Heart left ventricle (tissue), 16 donors: ENCODE measurements at regions of chr9 and their contacts with region 1.

Region 1: GRCh38 chr9:33167046-33167808 is at the start of gene B4GALT1:
- DNase-seq: peak; percentile 96 to 99 (median 97)
- ATAC-seq: peak; percentile 39 to 90 (median 71)
- H3K4me3 ChIP-seq: peak within 1 kb of the TSS; percentile 65 to 100 (median 91)
- H3K27ac ChIP-seq: peak within 1 kb of the TSS; percentile 96 to 100 (median 99)
- H3K4me1 ChIP-seq: peaks cover 13 to 63% (median 43%) of the 10 kb centered on the region in 12 donors
- H3K27me3 ChIP-seq: no peaks in the 10 kb centered on the region
- CTCF ChIP-seq: peak in 4 of 12 donors; percentile 12 to 35 (median 18)
- POLR2A ChIP-seq: peak; percentile 76 to 96
- total RNA-seq, gene B4GALT1: 27.4 to 73.3 (median 44.8) TPM

Region 2: DNA sequence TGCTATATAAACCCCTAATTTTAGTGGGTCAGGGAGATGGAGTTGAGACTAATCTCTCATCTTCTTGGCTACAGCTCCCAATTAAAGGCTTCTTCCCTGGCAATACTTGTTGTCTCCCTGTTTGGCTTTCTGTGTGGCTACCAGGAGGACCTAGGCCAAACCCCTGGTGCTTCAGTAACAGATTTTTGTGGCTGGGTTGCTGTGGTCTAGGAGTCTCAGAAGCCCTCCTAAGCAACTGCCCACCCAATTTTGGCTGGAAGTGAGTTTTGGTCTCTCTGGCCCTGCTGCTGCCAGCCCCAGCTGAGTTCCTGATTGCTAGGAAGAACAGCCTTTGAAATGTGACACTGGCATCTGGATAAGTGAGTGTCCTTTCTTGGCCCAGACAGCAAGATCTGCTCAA is 651.0 kb before region 1 on chr9:
- intact Hi-C with region 1: no loop called
- DNase-seq: no peak
- ATAC-seq: no peak
- H3K4me3 ChIP-seq: no peak overlapping the region
- H3K27ac ChIP-seq: no peak overlapping the region
- H3K4me1 ChIP-seq: peaks cover 0 to 9% (median 0%) of the 10 kb centered on the region in 12 donors
- H3K27me3 ChIP-seq: no peaks in the 10 kb centered on the region
- CTCF ChIP-seq: no peak
- POLR2A ChIP-seq: no peak

Region 3: GRCh38 chr9:33081128-33081851 is 85.9 kb before region 1 on chr9:
- intact Hi-C with region 1: loop called (anchors 1 to 5 kb)
- DNase-seq: peak in 4 of 5 donors; percentile 58 to 75 (median 64)
- ATAC-seq: peak in 3 of 4 donors; percentile 62 to 68 (median 62)
- H3K4me3 ChIP-seq: peak overlapping the region in 2 of 12 donors; percentile 11 to 37
- H3K27ac ChIP-seq: peak overlapping the region in 9 of 12 donors; percentile 9 to 81 (median 44)
- H3K4me1 ChIP-seq: peaks cover 0 to 29% (median 7%) of the 10 kb centered on the region in 12 donors
- H3K27me3 ChIP-seq: no peaks in the 10 kb centered on the region
- CTCF ChIP-seq: peak; percentile 60 to 85 (median 78)
- POLR2A ChIP-seq: no peak

Region 4: GRCh38 chr9:33106827-33107621 is 60.2 kb before region 1 on chr9:
- intact Hi-C with region 1: loop called in 7 of 10 experiments (anchors 2 to 10 kb)
- DNase-seq: peak; percentile 67 to 78 (median 76)
- ATAC-seq: peak; percentile 43 to 75 (median 69)
- H3K4me3 ChIP-seq: no peak overlapping the region
- H3K27ac ChIP-seq: peak overlapping the region; percentile 62 to 93 (median 79)
- H3K4me1 ChIP-seq: peaks cover 7 to 56% (median 30%) of the 10 kb centered on the region in 12 donors
- H3K27me3 ChIP-seq: no peaks in the 10 kb centered on the region
- CTCF ChIP-seq: no peak
- POLR2A ChIP-seq: no peak

Region 5: GRCh38 chr9:33130508-33130911 is 36.7 kb before region 1 on chr9:
- intact Hi-C with region 1: loop called in 6 of 10 experiments (anchors 5 kb)
- DNase-seq: no peak
- ATAC-seq: peak in 3 of 4 donors; percentile 8 to 46 (median 41)
- H3K4me3 ChIP-seq: no peak overlapping the region
- H3K27ac ChIP-seq: peak overlapping the region in 7 of 12 donors; percentile 20 to 45 (median 43)
- H3K4me1 ChIP-seq: peaks cover 22 to 87% (median 72%) of the 10 kb centered on the region in 12 donors
- H3K27me3 ChIP-seq: no peaks in the 10 kb centered on the region
- CTCF ChIP-seq: no peak
- POLR2A ChIP-seq: no peak

Region 6: DNA sequence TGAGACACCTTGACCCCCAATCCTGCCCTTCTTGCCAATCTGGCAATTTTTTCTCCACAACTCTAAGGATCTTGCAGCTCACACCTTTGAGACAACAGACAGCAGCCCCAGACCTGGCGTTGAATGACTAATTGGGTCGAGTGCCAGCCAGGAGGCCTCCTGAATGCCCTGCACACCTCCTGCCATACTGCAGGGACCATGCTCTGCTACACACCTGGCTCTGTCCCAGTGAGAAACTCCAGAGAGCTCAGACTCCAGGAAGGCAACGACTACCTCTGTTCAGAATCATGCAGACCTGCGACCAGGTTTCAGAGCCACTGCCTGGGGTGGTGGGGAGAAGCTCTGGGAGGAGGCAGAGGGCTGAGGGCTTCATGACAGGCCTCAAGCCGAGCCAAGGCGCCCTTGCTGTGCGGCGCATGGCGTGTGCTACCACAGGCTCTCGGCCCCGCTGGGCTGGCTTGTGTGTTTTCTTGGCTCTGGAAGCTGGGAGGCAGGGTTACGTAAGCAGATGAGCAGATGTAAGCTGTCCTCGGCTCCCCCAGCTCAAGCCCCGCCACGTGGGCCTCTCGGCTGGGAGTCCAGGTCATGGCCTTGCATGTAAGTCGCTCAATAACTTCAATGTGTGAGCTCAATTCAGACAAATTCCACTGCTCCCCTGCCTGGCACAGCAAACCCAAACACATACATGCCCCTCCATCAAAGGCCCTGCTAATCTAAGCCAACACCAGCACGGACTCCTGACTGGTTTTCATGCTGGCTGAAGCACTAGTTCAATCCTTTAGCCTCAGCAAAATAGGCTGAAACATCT is 27.6 kb before region 1 on chr9:
- intact Hi-C with region 1: loop called in 3 of 10 experiments (anchors 2 to 5 kb)
- DNase-seq: peak; percentile 83 to 91 (median 88)
- ATAC-seq: peak; percentile 65 to 83 (median 80)
- H3K4me3 ChIP-seq: peak overlapping the region in 3 of 12 donors; percentile 0 to 11 (median 7)
- H3K27ac ChIP-seq: peak overlapping the region; percentile 38 to 84 (median 76)
- H3K4me1 ChIP-seq: peaks cover 35 to 100% (median 97%) of the 10 kb centered on the region in 12 donors
- H3K27me3 ChIP-seq: no peaks in the 10 kb centered on the region
- CTCF ChIP-seq: no peak
- POLR2A ChIP-seq: no peak

Region 7: DNA sequence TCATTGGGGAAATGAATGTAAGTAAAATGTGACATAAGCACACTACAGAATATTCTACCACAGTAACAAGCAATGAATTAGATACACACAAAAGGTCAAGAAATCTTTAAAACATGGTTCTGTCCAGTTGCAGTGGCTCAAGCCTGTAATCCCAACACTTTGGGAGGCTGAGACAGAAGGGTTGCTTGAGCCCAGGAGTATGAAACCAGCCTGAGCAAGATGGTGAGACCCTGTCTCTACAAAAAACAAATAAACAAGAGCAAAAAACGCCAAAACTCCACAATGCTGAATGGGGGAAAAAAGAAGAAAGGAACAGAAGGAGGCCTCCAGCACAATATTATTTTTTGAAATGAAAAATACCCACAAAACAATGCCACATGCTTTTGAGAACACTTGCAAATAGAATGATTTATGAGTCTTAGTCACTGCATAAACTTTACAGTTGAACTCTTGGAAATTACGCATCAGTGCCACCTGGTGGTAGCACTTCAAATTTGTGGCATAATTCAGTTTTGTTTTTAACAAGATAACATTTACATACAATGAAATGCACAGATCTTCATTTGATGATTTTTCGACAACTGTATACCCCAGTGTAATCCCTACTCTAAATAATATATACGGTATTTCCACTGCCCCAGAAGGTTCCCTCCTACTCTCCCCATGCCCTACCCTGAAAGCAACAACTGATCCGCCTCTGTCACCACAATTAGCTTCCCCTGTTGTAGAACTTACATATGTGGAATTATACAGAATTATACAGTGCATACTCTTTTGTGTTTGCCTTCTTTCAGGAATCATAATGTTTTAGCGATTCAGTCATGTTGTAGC is 58.3 kb after region 1 on chr9:
- intact Hi-C with region 1: loop called in 9 of 10 experiments (anchors 2 to 10 kb)
- DNase-seq: peak in 3 of 5 donors; percentile 50 to 52 (median 51)
- ATAC-seq: peak in 2 of 4 donors; percentile 43 to 54
- H3K4me3 ChIP-seq: no peak overlapping the region
- H3K27ac ChIP-seq: peak overlapping the region in 1 of 12 donors; percentile 42
- H3K4me1 ChIP-seq: peaks cover 0 to 30% (median 3%) of the 10 kb centered on the region in 12 donors
- H3K27me3 ChIP-seq: no peaks in the 10 kb centered on the region
- CTCF ChIP-seq: peak; percentile 66 to 87 (median 82)
- POLR2A ChIP-seq: no peak

Region 8: GRCh38 chr9:33239921-33240320 is 72.7 kb after region 1 on chr9 and contains the start of gene SPINK4:
- intact Hi-C with region 1: no loop called
- DNase-seq: peak in 3 of 5 donors; percentile 35 to 39 (median 35)
- ATAC-seq: peak; percentile 28 to 76 (median 54)
- H3K4me3 ChIP-seq: no peak within 1 kb of the TSS
- H3K27ac ChIP-seq: no peak within 1 kb of the TSS
- H3K4me1 ChIP-seq: peaks cover 0 to 11% (median 7%) of the 10 kb centered on the region in 12 donors
- H3K27me3 ChIP-seq: no peaks in the 10 kb centered on the region
- CTCF ChIP-seq: no peak
- POLR2A ChIP-seq: no peak
- total RNA-seq, gene SPINK4: not detected

Region 9: GRCh38 chr9:33264473-33265177 is 97.4 kb after region 1 on chr9 and contains the starts of genes BAG1 and CHMP5:
- intact Hi-C with region 1: loop called in 1 of 10 experiments (anchors 5 kb)
- DNase-seq: peak; percentile 99 to 100 (median 100)
- ATAC-seq: peak; percentile 97 to 99 (median 98)
- H3K4me3 ChIP-seq: peak within 1 kb of the TSS; percentile 66 to 97 (median 91)
- H3K27ac ChIP-seq: peak within 1 kb of the TSS; percentile 76 to 99 (median 94)
- H3K4me1 ChIP-seq: peaks cover 0 to 36% (median 23%) of the 10 kb centered on the region in 12 donors
- H3K27me3 ChIP-seq: no peaks in the 10 kb centered on the region
- CTCF ChIP-seq: peak; percentile 12 to 69 (median 33)
- POLR2A ChIP-seq: peak; percentile 90 to 91
- total RNA-seq, gene BAG1: 71.0 to 144 (median 112) TPM
- total RNA-seq, gene CHMP5: 37.6 to 58.5 (median 53.0) TPM

Region 10: DNA sequence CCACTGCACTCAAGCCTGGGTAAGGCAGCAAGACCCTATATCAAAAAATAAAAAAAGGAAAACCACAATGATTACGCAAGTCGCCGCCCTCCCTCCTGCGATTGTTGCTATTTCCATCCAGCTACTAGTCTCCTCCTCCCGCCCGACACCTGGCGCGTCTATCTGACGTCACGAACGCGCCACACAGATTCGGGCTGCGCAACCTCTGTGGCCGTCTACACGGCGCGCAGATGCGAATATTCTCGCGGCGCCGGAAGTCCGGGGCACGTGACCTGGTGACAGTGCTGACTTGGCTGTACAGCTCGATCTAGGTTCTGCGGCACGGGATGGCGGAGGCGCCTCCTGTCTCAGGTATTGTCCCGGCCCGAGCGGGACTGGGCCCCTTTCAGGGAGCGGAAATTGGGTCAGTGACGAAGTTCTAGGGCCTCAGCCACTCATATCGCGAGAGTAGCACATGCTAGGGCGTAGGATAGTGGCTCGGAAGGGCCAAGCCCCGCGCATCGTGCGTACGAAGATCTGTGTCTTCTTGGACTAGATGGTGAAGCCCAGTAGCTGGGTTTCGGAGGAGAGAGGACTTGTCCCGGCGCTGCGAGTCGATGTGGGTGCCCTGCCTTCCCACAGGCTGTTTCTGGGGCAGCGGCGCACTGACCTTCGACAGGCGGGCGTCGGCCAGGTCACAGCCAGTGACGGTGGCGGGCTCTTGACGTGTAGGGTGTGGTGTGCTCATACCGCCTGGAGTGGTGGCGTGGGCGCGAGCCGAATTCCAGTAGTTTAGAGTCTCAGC is 123.2 kb after region 1 on chr9 and contains the start of gene NFX1:
- intact Hi-C with region 1: no loop called
- DNase-seq: peak; percentile 98 to 99 (median 98)
- ATAC-seq: peak; percentile 91 to 96 (median 94)
- H3K4me3 ChIP-seq: peak within 1 kb of the TSS; percentile 56 to 94 (median 78)
- H3K27ac ChIP-seq: peak within 1 kb of the TSS; percentile 94 to 100 (median 98)
- H3K4me1 ChIP-seq: peaks cover 9 to 58% (median 34%) of the 10 kb centered on the region in 12 donors
- H3K27me3 ChIP-seq: no peaks in the 10 kb centered on the region
- CTCF ChIP-seq: no peak
- POLR2A ChIP-seq: peak; percentile 36 to 90
- total RNA-seq, gene NFX1: 25.4 to 42.0 (median 36.1) TPM